Panc1 (cell line): ENCODE measurements at regions of chr13 and their contacts with region 1.

Region 1: DNA sequence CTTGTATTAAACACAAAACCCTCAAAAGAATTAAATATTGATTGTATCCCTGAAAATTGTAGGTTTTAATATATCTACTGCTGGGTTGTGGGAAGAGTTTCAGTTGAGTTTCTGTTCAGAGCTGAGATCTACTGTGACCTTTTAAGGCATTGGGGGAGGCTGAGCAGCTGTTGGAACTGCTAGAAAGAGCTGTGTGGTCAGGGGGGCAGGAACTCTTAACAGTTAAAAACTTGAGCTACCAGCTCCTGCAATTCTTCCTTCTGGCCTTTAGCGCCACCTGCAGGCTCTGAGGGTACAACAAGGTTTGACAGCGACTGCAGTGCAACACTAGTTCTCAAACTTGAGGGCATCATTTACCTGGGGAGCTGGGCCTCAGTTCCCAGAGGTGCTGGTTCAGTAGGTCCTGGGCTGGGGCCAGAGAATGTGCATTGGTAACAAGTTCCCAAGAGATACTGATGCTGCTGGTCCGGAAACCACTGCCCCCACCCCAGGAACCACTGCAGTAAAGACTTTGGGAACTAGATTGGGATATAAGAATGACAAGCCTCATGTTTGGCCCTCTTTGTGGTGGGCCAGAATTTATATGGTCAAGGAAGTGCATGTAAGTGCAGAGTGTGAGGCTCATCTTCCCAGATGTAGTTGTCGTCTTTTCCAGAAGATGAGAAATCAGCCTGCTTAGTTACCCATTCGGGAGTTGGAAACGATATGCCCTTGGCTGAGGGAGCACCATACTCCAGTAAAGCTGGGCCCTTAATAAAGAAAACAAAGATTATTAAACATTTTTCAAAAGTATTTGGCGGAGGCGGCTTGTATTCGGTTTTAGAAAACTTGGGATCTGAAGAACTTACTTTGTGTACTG is 2.6 kb downstream of the RNASEH2B start:
- DNase-seq: peak; percentile 60
- ATAC-seq: peak; percentile 46
- H3K4me3 ChIP-seq: peak overlapping the region; percentile 31 to 68
- H3K27ac ChIP-seq: peak overlapping the region; percentile 92
- H3K4me1 ChIP-seq: peaks cover 32% of the 10 kb centered on the region
- H3K27me3 ChIP-seq: no peaks in the 10 kb centered on the region
- CTCF ChIP-seq: peak; percentile 84

Region 2: DNA sequence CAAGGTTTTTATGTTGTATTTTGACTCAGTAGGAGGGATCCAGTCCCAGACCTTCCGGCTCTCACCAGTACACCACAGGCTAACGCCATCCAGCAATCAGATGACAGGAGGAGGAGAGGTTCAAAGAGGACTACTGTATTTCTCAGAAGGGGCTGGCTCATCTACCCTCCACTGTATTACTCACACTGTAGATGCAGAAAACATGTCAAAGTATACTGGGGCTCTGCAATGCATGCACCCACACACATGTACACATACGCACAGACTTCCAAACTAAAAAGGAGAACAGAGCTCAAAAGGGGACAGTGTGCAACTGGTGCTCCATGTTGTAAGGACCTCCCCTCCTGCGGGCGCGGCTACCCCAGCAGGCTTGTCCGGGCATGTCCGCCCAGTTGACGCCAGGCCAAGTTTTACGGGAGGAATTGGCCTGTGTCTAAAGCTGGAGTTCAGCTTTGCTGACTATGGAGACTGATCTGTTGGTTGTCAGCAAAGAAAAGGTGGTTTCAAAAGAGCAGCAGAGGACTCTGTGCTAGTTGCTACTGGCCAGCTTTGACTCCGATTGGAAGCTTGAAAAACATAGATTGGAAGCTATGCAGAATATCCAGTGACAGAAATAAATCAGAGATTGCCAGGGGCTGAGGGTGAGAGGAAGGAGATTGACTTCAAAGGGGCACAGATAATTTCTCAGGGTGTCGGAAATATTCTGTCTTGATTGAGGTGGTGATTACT is 382.8 kb before region 1 on chr13:
- CTCF ChIA-PET with region 1: no interaction called
- POLR2A ChIA-PET with region 1: no interaction called
- in situ Hi-C with region 1: no loop called
- intact Hi-C with region 1: loop called (anchors 5 kb)
- DNase-seq: no peak
- ATAC-seq: peak; percentile 88
- H3K4me3 ChIP-seq: peak overlapping the region in 1 of 2 experiments; percentile 36; a peak in 3 of 4 replicates
- H3K27ac ChIP-seq: peak overlapping the region; percentile 85
- H3K4me1 ChIP-seq: peaks cover 36% of the 10 kb centered on the region
- H3K27me3 ChIP-seq: no peaks in the 10 kb centered on the region
- CTCF ChIP-seq: no peak

Region 3: DNA sequence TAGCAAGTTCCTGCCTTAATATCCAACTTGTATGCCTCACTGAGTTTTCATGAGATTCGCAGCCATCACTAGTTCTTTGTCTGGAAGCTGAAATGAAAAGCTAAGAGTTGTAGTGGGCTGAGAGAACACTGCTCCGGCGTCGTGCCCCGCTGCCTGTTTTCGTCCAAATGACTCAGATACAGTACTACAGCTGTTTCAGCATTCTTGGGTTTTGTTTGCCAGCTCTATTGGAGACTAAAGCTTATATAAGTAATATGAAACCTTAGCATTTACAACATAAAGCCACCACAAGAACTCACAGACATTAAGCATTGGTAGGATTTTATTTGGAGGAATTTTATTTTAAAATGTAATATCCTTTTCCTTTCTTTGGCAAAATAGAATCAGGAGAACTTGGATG is 368.4 kb before region 1 on chr13:
- CTCF ChIA-PET with region 1: no interaction called
- POLR2A ChIA-PET with region 1: interaction called, 10 read pairs
- in situ Hi-C with region 1: no loop called
- intact Hi-C with region 1: no loop called
- DNase-seq: no peak
- ATAC-seq: no peak
- H3K4me3 ChIP-seq: no peak overlapping the region
- H3K27ac ChIP-seq: no peak overlapping the region
- H3K4me1 ChIP-seq: no peaks in the 10 kb centered on the region
- H3K27me3 ChIP-seq: no peaks in the 10 kb centered on the region
- CTCF ChIP-seq: no peak

Region 4: GRCh38 chr13:51070005-51070649 is 158.0 kb after region 1 on chr13:
- CTCF ChIA-PET with region 1: no interaction called
- POLR2A ChIA-PET with region 1: no interaction called
- in situ Hi-C with region 1: no loop called
- intact Hi-C with region 1: loop called (anchors 10 kb)
- DNase-seq: peak; percentile 72
- ATAC-seq: peak; percentile 94
- H3K4me3 ChIP-seq: no peak overlapping the region
- H3K27ac ChIP-seq: peak overlapping the region; percentile 51; the same call in 1 of the 2 replicates
- H3K4me1 ChIP-seq: peaks cover 2% of the 10 kb centered on the region; the same call in 1 of the 2 replicates
- H3K27me3 ChIP-seq: no peaks in the 10 kb centered on the region
- CTCF ChIP-seq: peak; percentile 86